Psoas muscle (tissue), 8 donors: ENCODE measurements at regions of chr1 and their contacts with region 1.

Region 1: GRCh38 chr1:216765380-216766300 is 42.4 kb upstream of the ESRRG start:
- DNase-seq: no peak
- ATAC-seq: peak; percentile 51 to 96 (median 96)
- H3K4me3 ChIP-seq: peak overlapping the region; percentile 44
- H3K27ac ChIP-seq: peak overlapping the region; percentile 70
- H3K4me1 ChIP-seq: peaks cover 6% of the 10 kb centered on the region
- H3K27me3 ChIP-seq: no peaks in the 10 kb centered on the region
- CTCF ChIP-seq: no peak

Region 2: GRCh38 chr1:216686860-216687766 is 78.5 kb before region 1 on chr1:
- intact Hi-C with region 1: no loop called
- DNase-seq: no peak
- ATAC-seq: peak in 2 of 4 donors; percentile 33 to 35
- H3K4me3 ChIP-seq: no peak overlapping the region
- H3K27ac ChIP-seq: no peak overlapping the region
- H3K4me1 ChIP-seq: peaks cover 7% of the 10 kb centered on the region
- H3K27me3 ChIP-seq: no peaks in the 10 kb centered on the region
- CTCF ChIP-seq: no peak

Region 3: GRCh38 chr1:216793303-216793702 is 27.7 kb after region 1 on chr1:
- intact Hi-C with region 1: no loop called
- DNase-seq: no peak
- ATAC-seq: no peak
- H3K4me3 ChIP-seq: no peak overlapping the region
- H3K27ac ChIP-seq: no peak overlapping the region
- H3K4me1 ChIP-seq: no peaks in the 10 kb centered on the region
- H3K27me3 ChIP-seq: no peaks in the 10 kb centered on the region
- CTCF ChIP-seq: no peak

Region 4: GRCh38 chr1:216804111-216804510 is 38.5 kb after region 1 on chr1:
- intact Hi-C with region 1: loop called in 1 of 2 experiments (anchors 5 kb)
- DNase-seq: peak in 1 of 2 donors; percentile 13
- ATAC-seq: peak; percentile 54 to 73 (median 64)
- H3K4me3 ChIP-seq: peak overlapping the region; percentile 46
- H3K27ac ChIP-seq: peak overlapping the region; percentile 74
- H3K4me1 ChIP-seq: peaks cover 11% of the 10 kb centered on the region
- H3K27me3 ChIP-seq: no peaks in the 10 kb centered on the region
- CTCF ChIP-seq: no peak